ENCODE measurements at regions of chr19 and their contacts with region 1.

Region 1: GRCh38 chr19:39177110-39177699 is 19.6 kb upstream of the NCCRP1 start:
- DNase-seq: no peak
- H3K4me3 ChIP-seq: no peak overlapping the region
- CTCF ChIP-seq: no peak

Region 2: GRCh38 chr19:39187559-39187957 is 10.4 kb after region 1 on chr19:
- CTCF ChIA-PET with region 1: interaction called, 13 read pairs
- POLR2A ChIA-PET with region 1: no interaction called
- DNase-seq: no peak
- H3K4me3 ChIP-seq: no peak overlapping the region
- CTCF ChIP-seq: no peak

Region 3: DNA sequence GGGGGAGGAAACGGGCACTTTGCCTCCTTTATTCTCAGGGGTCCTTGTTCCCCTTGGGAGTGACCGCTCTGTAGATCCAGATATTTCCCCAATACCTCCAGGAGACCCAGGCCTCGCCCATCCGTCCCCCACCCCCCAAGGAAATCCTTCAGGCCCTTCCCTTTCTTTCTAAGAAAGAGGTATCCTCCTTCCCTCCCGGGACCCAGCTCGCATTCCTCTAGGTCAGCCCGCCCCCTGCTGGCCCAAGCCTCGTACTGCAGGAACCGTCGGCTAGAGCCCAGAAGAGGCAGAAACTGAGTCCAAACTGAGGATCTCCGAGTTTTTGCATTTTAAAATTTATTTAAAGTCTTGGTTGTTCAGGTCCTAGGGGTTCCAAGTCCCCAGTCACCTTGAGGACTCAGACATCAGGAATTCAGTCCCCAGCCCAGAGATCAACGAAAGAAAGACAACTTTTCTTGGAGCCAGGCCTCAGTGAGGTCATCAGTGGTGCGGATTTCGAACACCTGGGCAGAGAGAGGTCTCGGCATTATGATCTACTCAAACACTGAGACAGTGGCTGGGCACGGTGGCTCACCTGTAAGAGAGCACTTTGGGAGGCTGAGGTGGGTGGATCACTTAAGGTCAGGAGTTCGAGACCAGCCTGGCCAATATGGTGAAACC is 151.0 kb after region 1 on chr19:
- CTCF ChIA-PET with region 1: no interaction called
- POLR2A ChIA-PET with region 1: no interaction called
- DNase-seq: no peak
- H3K4me3 ChIP-seq: no peak overlapping the region
- CTCF ChIP-seq: peak; percentile 92

Measured in AG04449 (cell line).